ENCODE measurements at regions of chr19 and their contacts with region 1.

Region 1: DNA sequence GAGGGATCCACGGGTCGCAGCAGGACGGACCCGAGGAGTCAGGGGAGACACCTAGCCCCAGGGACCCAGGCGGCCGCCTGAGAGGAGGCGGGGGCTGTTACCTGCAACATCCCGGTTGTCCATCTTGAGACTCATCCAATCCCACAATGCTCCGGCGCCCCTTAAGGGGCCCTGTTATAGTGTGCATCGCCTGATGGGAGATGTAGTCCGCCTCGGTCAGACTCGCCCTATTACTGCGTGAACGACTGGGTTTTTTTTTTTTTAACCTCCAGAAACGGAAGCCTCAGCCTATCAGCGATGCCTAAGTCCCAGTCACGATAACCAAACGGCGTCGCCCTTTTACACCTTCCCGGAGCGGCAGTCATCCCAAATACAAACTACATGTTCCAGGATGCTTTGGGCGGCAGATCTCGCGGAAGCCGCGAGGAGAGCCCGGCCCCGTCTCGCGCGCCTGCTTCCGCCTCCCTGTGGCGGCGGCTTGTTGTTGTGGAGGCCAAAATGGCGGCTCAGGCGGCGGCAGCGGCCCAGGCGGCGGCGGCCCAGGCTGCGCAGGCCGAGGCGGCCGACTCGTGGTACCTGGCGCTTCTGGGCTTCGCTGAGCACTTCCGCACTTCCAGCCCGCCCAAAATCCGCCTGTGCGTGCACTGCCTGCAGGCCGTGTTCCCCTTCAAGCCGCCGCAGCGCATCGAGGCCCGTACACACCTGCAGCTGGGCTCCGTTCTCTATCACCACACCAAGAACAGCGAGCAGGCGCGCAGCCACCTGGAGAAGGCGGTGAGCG is at the starts of genes MAU2 and SUGP1:
- DNase-seq: peak; percentile 90
- H3K4me3 ChIP-seq: peak within 1 kb of the TSS; percentile 98 to 100 (median 99)
- H3K27ac ChIP-seq: peak within 1 kb of the TSS; percentile 91
- H3K4me1 ChIP-seq: peaks cover 8% of the 10 kb centered on the region
- H3K27me3 ChIP-seq: no peaks in the 10 kb centered on the region
- CTCF ChIP-seq: peak; percentile 4 to 45
- total RNA-seq, gene MAU2: 39.7 to 44.5 TPM
- total RNA-seq, gene SUGP1: 23.3 to 48.1 TPM

Region 2: GRCh38 chr19:19063183-19064097 is 257.1 kb before region 1 on chr19 and contains the start of gene SLC25A42:
- CTCF ChIA-PET with region 1: no interaction called
- dilution Hi-C with region 1: no loop called
- in situ Hi-C with region 1: no loop called
- intact Hi-C with region 1: loop called (anchors 10 kb)
- DNase-seq: peak; percentile 99
- H3K4me3 ChIP-seq: peak within 1 kb of the TSS; percentile 56 to 82 (median 59)
- H3K27ac ChIP-seq: no peak within 1 kb of the TSS
- H3K4me1 ChIP-seq: peaks cover 23% of the 10 kb centered on the region
- H3K27me3 ChIP-seq: no peaks in the 10 kb centered on the region
- CTCF ChIP-seq: no peak
- total RNA-seq, gene SLC25A42: 3.0 to 5.1 TPM

Region 3: GRCh38 chr19:19366612-19367396 is 46.3 kb after region 1 on chr19:
- CTCF ChIA-PET with region 1: no interaction called
- dilution Hi-C with region 1: no loop called
- in situ Hi-C with region 1: no loop called
- intact Hi-C with region 1: no loop called
- DNase-seq: peak; percentile 78
- H3K4me3 ChIP-seq: no peak overlapping the region
- H3K27ac ChIP-seq: no peak overlapping the region
- H3K4me1 ChIP-seq: peaks cover 8% of the 10 kb centered on the region
- H3K27me3 ChIP-seq: no peaks in the 10 kb centered on the region
- CTCF ChIP-seq: peak; percentile 97 to 98

Region 4: DNA sequence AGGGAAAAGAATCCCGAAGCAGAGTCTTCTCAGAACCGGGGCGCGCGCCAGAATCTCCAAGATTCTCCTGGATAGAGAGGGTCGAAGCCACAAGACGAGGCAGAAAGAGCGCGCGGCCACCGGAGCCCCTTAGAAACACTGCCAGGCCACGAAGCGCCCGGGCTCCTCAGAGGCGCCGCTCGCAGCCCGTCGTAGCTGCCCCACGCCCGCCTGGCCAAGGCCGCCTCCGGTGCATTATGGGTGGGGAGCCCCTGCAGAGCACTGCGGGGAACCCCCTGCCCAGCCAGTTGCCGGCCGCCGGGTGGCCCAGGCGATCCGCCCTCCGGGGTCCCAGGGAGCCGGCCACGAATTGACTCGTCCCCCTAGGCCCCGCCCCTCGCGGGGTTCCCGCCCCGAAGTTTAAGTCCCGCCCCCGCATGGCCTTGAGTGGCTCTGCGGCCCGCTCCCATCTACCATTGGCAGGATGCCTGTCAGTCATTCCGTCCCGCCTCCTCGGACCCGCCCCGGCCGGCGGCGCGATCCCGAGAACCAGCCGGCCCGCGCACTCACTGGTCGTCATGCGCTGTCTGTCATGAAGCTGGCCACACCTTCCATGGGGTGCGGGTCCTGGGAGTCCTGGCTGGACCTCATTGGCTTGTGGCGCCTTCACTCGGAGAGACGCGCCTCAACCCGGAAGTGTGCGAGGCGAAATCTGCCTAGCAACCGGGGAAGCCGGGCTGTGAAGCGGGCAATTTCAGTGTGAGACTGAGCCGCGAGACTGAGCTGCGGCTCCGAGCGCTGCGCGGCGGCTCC is 64.8 kb after region 1 on chr19:
- CTCF ChIA-PET with region 1: no interaction called
- dilution Hi-C with region 1: no loop called
- in situ Hi-C with region 1: no loop called
- intact Hi-C with region 1: no loop called
- DNase-seq: peak; percentile 100
- H3K4me3 ChIP-seq: peak overlapping the region; percentile 84 to 85 (median 84)
- H3K27ac ChIP-seq: peak overlapping the region; percentile 31
- H3K4me1 ChIP-seq: peaks cover 27% of the 10 kb centered on the region
- H3K27me3 ChIP-seq: no peaks in the 10 kb centered on the region
- CTCF ChIP-seq: no peak